AG04449 (cell line): ENCODE measurements at regions of chr17 and their contacts with region 1.

Region 1: GRCh38 chr17:50094753-50095619 is at the start of gene PDK2:
- DNase-seq: peak; percentile 47
- H3K4me3 ChIP-seq: peak within 1 kb of the TSS; percentile 89
- CTCF ChIP-seq: no peak

Region 2: DNA sequence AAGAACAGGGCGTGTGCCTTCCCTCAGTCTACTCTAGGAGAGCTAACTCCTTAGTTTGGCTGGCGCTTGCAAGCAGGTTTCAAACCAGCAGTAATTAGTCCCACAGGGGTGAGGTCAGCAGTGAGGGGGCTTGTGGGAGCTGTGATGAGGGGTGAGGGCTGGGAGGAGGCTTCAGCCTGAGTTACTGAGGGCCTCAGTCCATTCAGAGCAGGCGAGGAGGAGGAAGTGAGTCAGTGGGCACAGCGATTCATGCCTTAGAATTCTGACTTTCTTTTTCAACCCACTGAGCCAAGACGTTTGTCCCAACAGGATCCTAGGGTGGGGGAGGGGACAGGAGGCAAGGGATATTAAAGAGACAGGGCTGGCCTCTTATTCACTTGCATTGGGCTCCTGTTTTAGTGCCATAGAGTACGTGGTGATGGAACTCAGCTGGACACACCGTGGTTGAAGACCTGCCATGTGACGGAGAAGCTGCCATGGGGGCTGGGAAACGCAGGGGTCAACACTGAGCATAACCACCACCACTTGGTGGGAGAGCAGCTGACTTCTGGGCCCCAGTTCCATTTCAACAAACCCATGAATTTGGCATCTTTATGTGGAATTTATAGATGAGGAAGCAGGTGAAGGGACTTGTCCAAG is 47.4 kb before region 1 on chr17:
- CTCF ChIA-PET with region 1: interaction called, 14 read pairs
- POLR2A ChIA-PET with region 1: no interaction called
- DNase-seq: no peak
- H3K4me3 ChIP-seq: no peak overlapping the region
- CTCF ChIP-seq: no peak

Region 3: GRCh38 chr17:50079334-50080095 is 15.5 kb before region 1 on chr17:
- CTCF ChIA-PET with region 1: interaction called, 93 read pairs
- POLR2A ChIA-PET with region 1: interaction called, 4 read pairs
- DNase-seq: no peak
- H3K4me3 ChIP-seq: no peak overlapping the region
- CTCF ChIP-seq: peak; percentile 78

Region 4: DNA sequence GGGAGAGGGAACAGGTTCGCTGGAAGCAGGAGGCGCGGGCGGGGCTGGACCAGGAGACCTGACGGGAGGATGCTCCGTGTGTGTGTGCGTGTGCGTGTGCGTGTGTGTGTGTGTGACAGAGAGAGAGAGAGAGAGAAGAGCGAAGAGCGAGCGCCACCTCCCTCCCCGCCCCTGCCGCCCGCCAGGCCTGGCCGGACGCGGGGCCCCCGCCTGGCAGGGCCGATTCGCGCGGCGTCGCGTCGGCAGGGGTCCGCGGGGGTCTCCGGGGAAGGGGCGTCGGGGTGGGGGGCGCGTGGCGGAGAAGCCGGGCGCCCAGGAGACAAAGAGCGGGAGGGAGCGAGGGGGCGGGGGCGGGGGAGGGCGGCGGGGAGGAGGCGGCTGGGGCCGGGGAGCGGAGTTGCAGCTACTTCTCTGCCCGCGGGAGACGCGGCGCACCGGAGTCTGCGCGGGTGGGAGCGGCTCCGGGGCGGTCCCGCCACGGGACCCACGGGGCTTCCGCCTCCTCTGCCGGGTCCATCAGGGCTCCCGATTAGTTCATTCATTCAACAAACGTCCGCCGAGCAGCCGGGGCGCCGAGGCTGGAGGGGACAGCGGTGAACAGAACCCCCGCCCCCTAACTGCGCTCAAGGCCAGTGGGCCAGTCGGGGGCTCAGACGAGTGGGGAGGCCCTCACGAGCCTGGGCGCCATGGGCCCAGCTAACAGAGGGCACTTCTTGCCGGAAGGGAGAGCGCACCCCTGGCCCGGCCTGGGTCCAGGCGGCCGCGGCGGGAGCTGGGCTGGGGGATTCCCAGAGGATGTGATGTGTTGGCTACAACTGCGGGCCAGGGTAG is 35.0 kb after region 1 on chr17 and contains the start of gene SAMD14:
- CTCF ChIA-PET with region 1: interaction called, 19 read pairs
- POLR2A ChIA-PET with region 1: no interaction called
- DNase-seq: no peak
- H3K4me3 ChIP-seq: peak within 1 kb of the TSS; percentile 67
- CTCF ChIP-seq: no peak

Region 5: DNA sequence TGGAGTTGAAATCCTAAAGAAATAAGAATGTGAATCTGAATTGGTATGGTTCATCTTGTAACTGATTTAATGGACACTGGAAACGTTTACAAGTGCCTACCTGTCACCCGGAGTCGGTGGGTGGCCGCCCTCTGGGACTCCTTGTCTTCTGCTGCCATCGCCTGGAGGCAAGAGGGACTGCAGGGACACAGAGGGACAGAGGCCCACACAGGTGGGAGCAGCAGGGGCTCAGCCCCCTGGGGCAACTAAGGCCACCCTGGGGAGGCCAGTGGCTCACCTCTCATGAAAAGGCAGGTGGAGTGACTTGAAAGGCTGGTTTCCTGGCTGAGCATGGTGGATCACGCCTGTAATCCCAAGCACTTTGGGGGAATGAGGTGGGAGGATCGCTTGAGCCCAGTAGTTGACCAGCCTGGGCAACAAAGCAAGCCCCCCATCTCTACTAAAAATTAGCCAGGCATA is 202.4 kb after region 1 on chr17:
- CTCF ChIA-PET with region 1: interaction called, 280 read pairs
- POLR2A ChIA-PET with region 1: interaction called, 5 read pairs
- DNase-seq: no peak
- H3K4me3 ChIP-seq: no peak overlapping the region
- CTCF ChIP-seq: peak; percentile 96